Calu3 (cell line): ENCODE measurements at regions of chr2 and their contacts with region 1.

Region 1: GRCh38 chr2:84526562-84526961 is 10.3 kb downstream of the DNAH6 start:
- DNase-seq: no peak
- H3K4me3 Mint-ChIP-seq: no peak overlapping the region
- H3K27ac Mint-ChIP-seq: no peak overlapping the region
- H3K4me1 Mint-ChIP-seq: peaks cover 6% of the 10 kb centered on the region
- H3K27me3 Mint-ChIP-seq: no peaks in the 10 kb centered on the region
- CTCF ChIP-seq: no peak

Region 2: GRCh38 chr2:84640411-84640810 is 113.8 kb after region 1 on chr2:
- CTCF ChIA-PET with region 1: no interaction called
- intact Hi-C with region 1: no loop called
- DNase-seq: no peak
- H3K4me3 Mint-ChIP-seq: no peak overlapping the region
- H3K27ac Mint-ChIP-seq: no peak overlapping the region
- H3K4me1 Mint-ChIP-seq: no peaks in the 10 kb centered on the region
- H3K27me3 Mint-ChIP-seq: peaks cover 34% of the 10 kb centered on the region
- CTCF ChIP-seq: no peak

Region 3: GRCh38 chr2:84735389-84735788 is 208.8 kb after region 1 on chr2:
- CTCF ChIA-PET with region 1: no interaction called
- intact Hi-C with region 1: loop called (anchors 10 kb)
- DNase-seq: no peak
- H3K4me3 Mint-ChIP-seq: no peak overlapping the region
- H3K27ac Mint-ChIP-seq: no peak overlapping the region
- H3K4me1 Mint-ChIP-seq: no peaks in the 10 kb centered on the region
- H3K27me3 Mint-ChIP-seq: peaks cover 37% of the 10 kb centered on the region
- CTCF ChIP-seq: no peak